ENCODE measurements at regions of chr10 and their contacts with region 1.

Region 1: DNA sequence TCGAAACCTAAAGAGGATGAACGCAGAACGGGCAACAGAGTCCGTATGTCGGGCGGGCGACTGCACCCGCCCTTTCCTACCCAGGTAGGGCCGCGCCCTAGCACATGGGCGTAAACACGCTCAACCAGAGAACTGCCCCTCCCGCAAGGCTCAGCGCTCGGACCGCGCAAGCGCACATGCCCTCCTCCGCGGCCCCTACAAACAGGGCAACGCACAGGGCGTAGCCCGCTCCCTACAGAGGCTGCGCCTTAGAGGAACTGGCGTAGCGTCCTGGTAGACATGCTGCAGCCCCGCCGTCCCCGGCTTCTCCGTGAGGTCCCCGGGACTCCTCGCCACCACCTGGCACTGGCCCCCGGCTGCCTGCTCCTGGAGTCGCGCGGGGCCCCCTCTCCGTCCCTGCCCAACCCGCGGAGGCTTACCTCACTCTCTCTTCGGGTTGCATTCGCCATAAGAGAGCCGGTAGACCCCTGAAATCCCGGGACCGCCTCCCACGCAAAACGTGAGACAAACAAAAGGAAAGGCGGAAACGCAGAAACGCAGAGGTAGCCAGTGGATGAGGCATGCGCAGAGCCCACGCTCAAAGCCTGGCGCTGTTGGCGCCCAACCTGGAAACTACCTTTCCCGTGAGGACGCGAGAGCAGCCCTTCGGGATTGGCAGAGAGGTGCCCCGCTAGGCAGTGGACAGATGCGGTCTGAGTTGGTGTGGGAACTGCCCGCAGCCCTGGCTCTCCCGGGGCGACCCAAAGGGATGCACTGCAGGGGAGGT is at the start of gene ZNF33B:
- DNase-seq: peak; percentile 96
- H3K4me3 Mint-ChIP-seq: peak within 1 kb of the TSS; percentile 97
- H3K27ac Mint-ChIP-seq: peak within 1 kb of the TSS; percentile 99
- H3K4me1 Mint-ChIP-seq: peaks cover 29% of the 10 kb centered on the region
- H3K27me3 Mint-ChIP-seq: no peaks in the 10 kb centered on the region
- total RNA-seq, gene ZNF33B: 10.4 to 14.8 TPM

Region 2: GRCh38 chr10:42552493-42553407 is 85.5 kb before region 1 on chr10:
- CTCF ChIA-PET with region 1: no interaction called
- intact Hi-C with region 1: loop called (anchors 1 kb)
- DNase-seq: peak; percentile 97
- H3K4me3 Mint-ChIP-seq: peak overlapping the region; percentile 87
- H3K27ac Mint-ChIP-seq: peak overlapping the region; percentile 92
- H3K4me1 Mint-ChIP-seq: peaks cover 33% of the 10 kb centered on the region
- H3K27me3 Mint-ChIP-seq: no peaks in the 10 kb centered on the region

Region 3: GRCh38 chr10:42753126-42753506 is 114.9 kb after region 1 on chr10:
- CTCF ChIA-PET with region 1: no interaction called
- intact Hi-C with region 1: loop called (anchors 1 kb)
- DNase-seq: peak; percentile 80
- H3K4me3 Mint-ChIP-seq: peak overlapping the region; percentile 67
- H3K27ac Mint-ChIP-seq: no peak overlapping the region
- H3K4me1 Mint-ChIP-seq: peaks cover 7% of the 10 kb centered on the region
- H3K27me3 Mint-ChIP-seq: peaks cover 55% of the 10 kb centered on the region

Region 4: DNA sequence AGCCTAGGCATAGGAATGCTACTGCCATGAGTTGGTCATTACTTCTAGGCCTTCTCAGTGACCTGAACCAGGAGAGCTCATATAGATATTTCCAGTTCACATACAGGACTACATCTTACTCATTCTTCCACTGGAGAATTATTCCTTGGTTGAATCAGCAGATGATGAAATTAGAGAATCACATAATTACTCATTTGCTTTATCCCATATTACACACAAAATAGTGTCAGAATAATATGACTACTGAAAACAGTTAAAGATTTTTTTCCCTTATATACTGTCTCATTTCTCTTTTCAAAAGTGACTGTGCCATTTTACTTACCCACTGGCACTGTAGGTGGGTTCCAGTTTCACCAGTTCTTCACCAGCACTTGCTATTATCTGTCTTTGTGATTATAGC is 162.9 kb after region 1 on chr10:
- CTCF ChIA-PET with region 1: no interaction called
- intact Hi-C with region 1: loop called (anchors 1 kb)
- DNase-seq: peak; percentile 27
- H3K4me3 Mint-ChIP-seq: no peak overlapping the region
- H3K27ac Mint-ChIP-seq: peak overlapping the region; percentile 46
- H3K4me1 Mint-ChIP-seq: peaks cover 28% of the 10 kb centered on the region
- H3K27me3 Mint-ChIP-seq: no peaks in the 10 kb centered on the region

Region 5: GRCh38 chr10:43120929-43121314 is 482.7 kb after region 1 on chr10:
- CTCF ChIA-PET with region 1: no interaction called
- intact Hi-C with region 1: loop called (anchors 1 kb)
- DNase-seq: peak; percentile 91
- H3K4me3 Mint-ChIP-seq: no peak overlapping the region
- H3K27ac Mint-ChIP-seq: peak overlapping the region; percentile 77
- H3K4me1 Mint-ChIP-seq: peaks cover 16% of the 10 kb centered on the region
- H3K27me3 Mint-ChIP-seq: no peaks in the 10 kb centered on the region

Region 6: DNA sequence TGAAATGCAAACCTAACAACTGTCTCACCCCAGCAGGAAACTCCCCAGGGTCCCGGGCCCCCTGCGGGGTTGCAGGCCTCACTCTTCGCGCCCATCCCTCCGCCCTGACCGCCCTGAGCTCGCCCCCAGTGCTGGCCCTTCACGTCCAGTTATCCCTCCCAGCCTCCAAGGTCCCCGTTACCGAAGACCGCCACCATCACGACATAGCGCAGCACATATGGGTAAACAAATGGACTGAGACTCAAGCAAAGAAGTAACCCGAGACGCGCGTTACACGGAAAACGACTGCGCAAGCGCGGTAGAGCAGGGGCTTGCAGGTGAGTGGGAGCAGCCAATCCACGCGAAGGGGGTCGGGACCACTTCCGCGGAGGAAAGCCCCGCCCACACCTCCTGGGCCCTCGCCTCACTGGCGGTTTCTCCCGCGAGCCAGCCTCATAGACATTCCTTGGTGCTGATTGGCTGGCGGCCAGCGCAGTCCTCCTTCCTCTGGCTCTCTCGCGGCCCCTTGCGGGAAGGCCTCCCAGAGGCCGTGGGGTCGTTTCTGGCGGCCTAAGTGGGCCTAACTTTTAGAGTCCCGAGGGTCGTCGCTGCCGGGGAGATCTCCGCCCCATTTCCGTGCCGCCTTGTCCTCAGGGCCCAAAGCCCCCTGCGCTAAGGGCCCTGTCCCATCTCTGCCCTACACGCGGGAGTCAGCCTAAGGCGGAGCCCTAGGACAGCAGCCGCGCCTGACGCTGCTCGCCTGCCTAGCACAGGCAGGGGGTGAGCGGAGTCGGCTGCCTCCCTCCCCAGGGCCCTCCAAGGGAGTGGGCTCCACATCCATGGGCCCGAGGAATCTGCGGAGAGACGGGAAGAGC is 724.0 kb after region 1 on chr10:
- CTCF ChIA-PET with region 1: no interaction called
- intact Hi-C with region 1: loop called (anchors 1 kb)
- DNase-seq: peak; percentile 98
- H3K4me3 Mint-ChIP-seq: peak overlapping the region; percentile 95
- H3K27ac Mint-ChIP-seq: peak overlapping the region; percentile 96
- H3K4me1 Mint-ChIP-seq: peaks cover 23% of the 10 kb centered on the region
- H3K27me3 Mint-ChIP-seq: no peaks in the 10 kb centered on the region

Region 7: GRCh38 chr10:43574001-43574892 is 936.0 kb after region 1 on chr10 and contains the start of gene ZNF239:
- CTCF ChIA-PET with region 1: no interaction called
- intact Hi-C with region 1: loop called (anchors 1 kb)
- DNase-seq: peak; percentile 90
- H3K4me3 Mint-ChIP-seq: peak within 1 kb of the TSS; percentile 77
- H3K27ac Mint-ChIP-seq: peak within 1 kb of the TSS; percentile 79
- H3K4me1 Mint-ChIP-seq: peaks cover 56% of the 10 kb centered on the region
- H3K27me3 Mint-ChIP-seq: no peaks in the 10 kb centered on the region
- total RNA-seq, gene ZNF239: 2.0 to 2.5 TPM

Measured in activated naive CD4-positive, alpha-beta T cell treated with anti-CD3 and anti-CD28 coated beads for 36 hours (primary cell).